Naive thymus-derived CD4-positive, alpha-beta T cell (primary cell): ENCODE measurements at regions of chr6 and their contacts with region 1.

Region 1: GRCh38 chr6:129748212-129748900 is 38.4 kb upstream of the ARHGAP18 start:
- DNase-seq: peak in 8 of 9 donors; percentile 35 to 61 (median 42)
- ATAC-seq: peak; percentile 85
- H3K4me3 ChIP-seq: peak overlapping the region; percentile 43
- H3K4me3 Mint-ChIP-seq: peak overlapping the region; percentile 31 to 86 (median 79)
- H3K27ac ChIP-seq: peak overlapping the region; percentile 69
- H3K27ac Mint-ChIP-seq: peak overlapping the region; percentile 82 to 97 (median 89)
- H3K4me1 ChIP-seq: peaks cover 44 to 49% of the 10 kb centered on the region in 2 donors
- H3K4me1 Mint-ChIP-seq: peaks cover 40 to 81% (median 71%) of the 10 kb centered on the region in 7 donors
- H3K27me3 ChIP-seq: no peaks in the 10 kb centered on the region
- H3K27me3 Mint-ChIP-seq: no peaks in the 10 kb centered on the region

Region 2: GRCh38 chr6:129498950-129499842 is 249.2 kb before region 1 on chr6:
- CTCF ChIA-PET with region 1: interaction called, 5 read pairs
- POLR2A ChIA-PET with region 1: no interaction called
- intact Hi-C with region 1: loop called (anchors 1 kb)
- DNase-seq: peak in 7 of 9 donors; percentile 25 to 60 (median 52)
- ATAC-seq: peak; percentile 82
- H3K4me3 ChIP-seq: peak overlapping the region; percentile 37
- H3K4me3 Mint-ChIP-seq: peak overlapping the region; percentile 23 to 81 (median 64)
- H3K27ac ChIP-seq: no peak overlapping the region
- H3K27ac Mint-ChIP-seq: peak overlapping the region in 7 of 9 donors; percentile 0 to 62 (median 2)
- H3K4me1 ChIP-seq: peaks cover 0 to 5% of the 10 kb centered on the region in 2 donors
- H3K4me1 Mint-ChIP-seq: peaks cover 9 to 43% (median 18%) of the 10 kb centered on the region in 7 donors
- H3K27me3 ChIP-seq: no peaks in the 10 kb centered on the region
- H3K27me3 Mint-ChIP-seq: no peaks in the 10 kb centered on the region

Region 3: GRCh38 chr6:129555206-129555832 is 193.0 kb before region 1 on chr6:
- CTCF ChIA-PET with region 1: no interaction called
- POLR2A ChIA-PET with region 1: no interaction called
- intact Hi-C with region 1: no loop called
- DNase-seq: no peak
- ATAC-seq: no peak
- H3K4me3 ChIP-seq: no peak overlapping the region
- H3K4me3 Mint-ChIP-seq: no peak overlapping the region
- H3K27ac ChIP-seq: no peak overlapping the region
- H3K27ac Mint-ChIP-seq: no peak overlapping the region
- H3K4me1 ChIP-seq: no peaks in the 10 kb centered on the region
- H3K4me1 Mint-ChIP-seq: no peaks in the 10 kb centered on the region
- H3K27me3 ChIP-seq: no peaks in the 10 kb centered on the region
- H3K27me3 Mint-ChIP-seq: peaks cover 5 to 12% (median 11%) of the 10 kb centered on the region in 5 donors

Region 4: GRCh38 chr6:129635396-129636130 is 112.8 kb before region 1 on chr6:
- CTCF ChIA-PET with region 1: no interaction called
- POLR2A ChIA-PET with region 1: no interaction called
- intact Hi-C with region 1: no loop called
- DNase-seq: no peak
- ATAC-seq: no peak
- H3K4me3 ChIP-seq: no peak overlapping the region
- H3K4me3 Mint-ChIP-seq: no peak overlapping the region
- H3K27ac ChIP-seq: no peak overlapping the region
- H3K27ac Mint-ChIP-seq: peak overlapping the region in 1 of 9 donors; percentile 33
- H3K4me1 ChIP-seq: no peaks in the 10 kb centered on the region
- H3K4me1 Mint-ChIP-seq: peaks cover 0 to 3% (median 0%) of the 10 kb centered on the region in 7 donors
- H3K27me3 ChIP-seq: no peaks in the 10 kb centered on the region
- H3K27me3 Mint-ChIP-seq: no peaks in the 10 kb centered on the region

Region 5: GRCh38 chr6:129672881-129673643 is 75.3 kb before region 1 on chr6:
- CTCF ChIA-PET with region 1: interaction called, 4 read pairs
- POLR2A ChIA-PET with region 1: no interaction called
- intact Hi-C with region 1: loop called (anchors 1 to 2 kb)
- DNase-seq: peak in 2 of 9 donors; percentile 7 to 26
- ATAC-seq: peak; percentile 35
- H3K4me3 ChIP-seq: no peak overlapping the region
- H3K4me3 Mint-ChIP-seq: peak overlapping the region in 9 of 10 donors; percentile 69 to 88 (median 85)
- H3K27ac ChIP-seq: peak overlapping the region; percentile 34
- H3K27ac Mint-ChIP-seq: peak overlapping the region in 8 of 9 donors; percentile 40 to 95 (median 85)
- H3K4me1 ChIP-seq: peaks cover 16 to 22% of the 10 kb centered on the region in 2 donors
- H3K4me1 Mint-ChIP-seq: peaks cover 18 to 57% (median 25%) of the 10 kb centered on the region in 7 donors
- H3K27me3 ChIP-seq: no peaks in the 10 kb centered on the region
- H3K27me3 Mint-ChIP-seq: no peaks in the 10 kb centered on the region

Region 6: DNA sequence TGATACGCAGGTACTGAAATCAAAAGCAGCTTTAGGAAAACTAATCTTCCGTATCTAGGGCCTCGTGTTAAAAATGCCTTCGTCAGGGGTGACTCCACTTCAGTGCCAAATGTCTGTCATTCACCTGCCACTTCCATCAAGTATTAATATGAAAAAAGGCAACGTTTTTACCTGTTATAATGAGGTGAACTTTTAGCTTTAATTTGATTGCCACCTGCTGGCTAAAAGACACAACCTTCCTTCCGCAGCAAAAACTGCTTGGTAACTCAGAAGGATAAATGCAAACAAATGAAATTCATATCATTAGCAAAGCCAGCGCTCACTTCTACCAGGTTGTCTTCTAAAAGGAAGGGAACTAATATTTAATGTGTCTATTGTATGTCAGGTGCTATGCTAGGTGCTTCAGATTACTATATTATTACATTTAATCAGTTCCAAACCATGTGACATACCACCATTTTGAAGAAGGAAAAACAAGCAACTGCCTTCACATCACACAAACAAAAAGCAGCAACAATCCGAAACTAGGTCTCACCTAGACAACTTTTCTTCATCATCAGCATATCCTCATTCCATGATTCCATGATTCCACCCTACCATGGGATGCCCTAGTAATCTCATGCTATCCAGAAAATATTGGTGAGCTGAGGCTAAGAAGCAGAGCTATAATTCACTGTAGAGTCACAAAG is 17.7 kb before region 1 on chr6:
- CTCF ChIA-PET with region 1: interaction called, 27 read pairs
- POLR2A ChIA-PET with region 1: interaction called, 3 read pairs
- intact Hi-C with region 1: loop called (anchors 1 kb)
- DNase-seq: peak in 7 of 9 donors; percentile 22 to 62 (median 50)
- ATAC-seq: peak; percentile 66
- H3K4me3 ChIP-seq: no peak overlapping the region
- H3K4me3 Mint-ChIP-seq: no peak overlapping the region
- H3K27ac ChIP-seq: no peak overlapping the region
- H3K27ac Mint-ChIP-seq: peak overlapping the region in 4 of 9 donors; percentile 46 to 70 (median 50)
- H3K4me1 ChIP-seq: no peaks in the 10 kb centered on the region
- H3K4me1 Mint-ChIP-seq: peaks cover 0 to 13% (median 3%) of the 10 kb centered on the region in 7 donors
- H3K27me3 ChIP-seq: no peaks in the 10 kb centered on the region
- H3K27me3 Mint-ChIP-seq: no peaks in the 10 kb centered on the region

Region 7: DNA sequence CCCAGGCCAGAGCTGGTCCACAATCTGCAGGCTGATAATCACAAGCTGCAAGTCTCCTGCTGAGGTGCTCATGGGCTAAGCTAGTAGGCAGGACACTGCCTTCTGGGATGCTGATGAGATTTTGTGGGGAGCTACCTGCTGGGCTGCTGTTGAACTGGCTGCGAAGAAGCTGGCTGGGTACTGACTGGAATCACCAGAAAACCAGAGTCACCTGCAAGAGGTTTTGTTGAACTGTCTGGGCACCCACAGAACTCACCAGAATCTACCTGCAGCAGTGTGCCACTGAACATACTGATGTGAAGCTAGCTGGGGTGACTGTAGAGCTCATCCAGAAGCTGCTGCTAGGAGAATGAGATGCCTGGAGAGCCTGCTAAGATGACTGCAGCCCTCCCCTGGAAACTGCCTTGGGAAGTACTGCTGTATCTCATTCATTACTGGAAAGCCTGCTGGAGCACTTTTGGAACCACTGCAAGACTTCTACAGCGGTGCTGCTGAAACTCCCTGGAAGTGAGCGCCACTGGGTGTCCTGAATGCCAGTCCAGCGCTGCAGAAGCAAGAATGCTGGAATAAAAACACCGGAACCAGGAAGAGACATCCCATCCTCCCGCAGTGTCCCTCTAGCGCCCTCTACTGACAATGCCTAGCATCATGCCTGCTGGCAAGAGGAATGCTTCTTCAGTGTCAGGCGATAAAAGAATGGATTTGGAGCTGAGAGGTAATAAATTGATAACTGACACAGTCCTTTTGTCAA is 26.5 kb after region 1 on chr6:
- CTCF ChIA-PET with region 1: interaction called, 3 read pairs
- POLR2A ChIA-PET with region 1: no interaction called
- intact Hi-C with region 1: loop called in 1 of 2 experiments (anchors 1 kb)
- DNase-seq: peak in 7 of 9 donors; percentile 4 to 35 (median 24)
- ATAC-seq: peak; percentile 63
- H3K4me3 ChIP-seq: no peak overlapping the region
- H3K4me3 Mint-ChIP-seq: no peak overlapping the region
- H3K27ac ChIP-seq: no peak overlapping the region
- H3K27ac Mint-ChIP-seq: no peak overlapping the region
- H3K4me1 ChIP-seq: no peaks in the 10 kb centered on the region
- H3K4me1 Mint-ChIP-seq: peaks cover 0 to 5% (median 3%) of the 10 kb centered on the region in 7 donors
- H3K27me3 ChIP-seq: no peaks in the 10 kb centered on the region
- H3K27me3 Mint-ChIP-seq: peaks cover 0 to 39% (median 0%) of the 10 kb centered on the region in 5 donors